ENCODE measurements at regions of chr2 and their contacts with region 1.

Region 1: GRCh38 chr2:230658877-230659652 is 53.6 kb upstream of the CAB39 start:
- DNase-seq: peak; percentile 80
- H3K4me3 Mint-ChIP-seq: peak overlapping the region; percentile 91
- H3K27ac Mint-ChIP-seq: peak overlapping the region; percentile 99
- H3K4me1 Mint-ChIP-seq: peaks cover 83% of the 10 kb centered on the region
- H3K27me3 Mint-ChIP-seq: no peaks in the 10 kb centered on the region

Region 2: GRCh38 chr2:229921892-229922445 is 737.1 kb before region 1 on chr2 and contains the start of gene TRIP12:
- intact Hi-C with region 1: loop called (anchors 5 kb)
- DNase-seq: peak; percentile 89
- H3K4me3 Mint-ChIP-seq: peak within 1 kb of the TSS; percentile 100
- H3K27ac Mint-ChIP-seq: peak within 1 kb of the TSS; percentile 98
- H3K4me1 Mint-ChIP-seq: peaks cover 31% of the 10 kb centered on the region
- H3K27me3 Mint-ChIP-seq: no peaks in the 10 kb centered on the region
- total RNA-seq, gene TRIP12: 256 and 269 TPM in 2 replicates

Region 3: DNA sequence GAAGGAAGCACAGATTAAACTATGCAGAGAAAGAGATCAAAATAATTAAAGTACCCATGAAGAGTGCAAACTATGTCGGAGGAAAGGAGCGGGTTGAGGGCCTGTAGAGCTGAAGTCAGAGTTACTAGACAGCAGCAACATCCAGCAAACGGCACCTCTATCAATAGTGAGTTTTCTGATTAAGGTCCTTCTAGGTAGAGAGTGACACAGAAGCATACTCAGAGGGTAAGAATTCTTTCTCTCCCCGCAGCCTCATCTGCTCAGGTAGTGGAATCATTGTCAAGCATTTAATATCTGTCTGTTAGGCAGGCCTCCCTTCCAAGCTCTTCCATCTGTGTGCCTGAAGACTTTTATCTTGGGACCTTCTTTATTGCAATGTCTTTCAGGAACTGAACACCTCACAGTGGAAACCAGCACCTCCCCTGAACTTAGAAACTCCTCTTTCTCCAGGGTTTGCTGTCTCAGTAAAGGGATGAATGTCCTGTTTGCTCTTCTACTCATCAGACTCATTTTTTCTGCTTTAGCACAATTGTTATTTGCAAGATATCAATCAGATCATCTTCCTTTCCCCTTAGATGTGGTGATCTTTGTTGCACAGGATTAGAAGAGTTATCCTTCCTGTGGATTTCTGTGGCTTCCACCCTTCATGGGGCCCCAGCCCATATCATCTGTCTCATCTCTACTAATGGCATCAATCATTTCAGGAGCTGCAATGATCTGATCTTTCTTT is 404.7 kb before region 1 on chr2:
- intact Hi-C with region 1: loop called (anchors 2 kb)
- DNase-seq: peak; percentile 54
- H3K4me3 Mint-ChIP-seq: no peak overlapping the region
- H3K27ac Mint-ChIP-seq: no peak overlapping the region
- H3K4me1 Mint-ChIP-seq: peaks cover 17% of the 10 kb centered on the region
- H3K27me3 Mint-ChIP-seq: no peaks in the 10 kb centered on the region

Region 4: DNA sequence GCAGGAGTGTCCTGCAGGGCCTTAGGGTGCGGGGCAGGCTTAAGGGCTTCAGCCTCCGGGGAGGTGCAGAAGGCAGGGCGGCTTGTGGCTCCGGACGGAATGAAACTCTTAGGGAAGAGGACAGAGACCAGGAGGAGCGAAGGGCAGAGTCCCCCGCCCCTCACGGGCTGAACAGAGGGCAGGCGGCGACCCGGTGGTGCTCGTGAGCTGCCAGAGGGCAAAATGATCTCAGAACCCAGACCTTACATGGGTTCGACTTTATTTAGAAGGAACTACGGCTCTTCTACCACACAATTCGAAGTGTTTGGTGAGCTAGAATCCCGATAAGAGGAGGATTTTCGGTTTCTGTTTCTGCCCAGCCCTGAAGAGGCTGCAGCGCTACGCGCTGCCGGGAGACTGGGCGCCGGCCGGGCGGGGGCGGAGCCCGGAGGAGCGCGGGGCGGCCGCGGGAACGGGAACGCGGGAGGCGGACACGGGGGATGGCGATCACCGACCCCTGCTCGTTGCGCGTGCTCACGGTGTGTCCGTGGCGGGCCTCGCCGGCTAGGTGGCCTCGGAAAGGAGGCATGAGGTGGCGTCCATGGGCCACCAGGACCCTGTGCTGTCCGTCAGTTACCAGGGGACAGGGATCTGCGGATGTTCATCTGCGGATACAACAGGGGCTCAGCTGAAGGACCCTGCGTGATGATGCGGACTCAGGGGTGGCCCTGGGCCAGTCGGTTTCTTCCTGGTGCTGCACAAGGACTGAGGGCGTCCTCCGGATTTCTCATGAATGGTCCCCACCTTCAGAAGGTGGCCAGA is 247.3 kb before region 1 on chr2:
- intact Hi-C with region 1: loop called (anchors 5 kb)
- DNase-seq: peak; percentile 74
- H3K4me3 Mint-ChIP-seq: peak overlapping the region; percentile 98
- H3K27ac Mint-ChIP-seq: peak overlapping the region; percentile 100
- H3K4me1 Mint-ChIP-seq: peaks cover 61% of the 10 kb centered on the region
- H3K27me3 Mint-ChIP-seq: no peaks in the 10 kb centered on the region

Region 5: GRCh38 chr2:230537531-230537976 is 121.5 kb before region 1 on chr2:
- intact Hi-C with region 1: no loop called
- DNase-seq: no peak
- H3K4me3 Mint-ChIP-seq: no peak overlapping the region
- H3K27ac Mint-ChIP-seq: peak overlapping the region; percentile 44
- H3K4me1 Mint-ChIP-seq: peaks cover 39% of the 10 kb centered on the region
- H3K27me3 Mint-ChIP-seq: no peaks in the 10 kb centered on the region

Region 6: DNA sequence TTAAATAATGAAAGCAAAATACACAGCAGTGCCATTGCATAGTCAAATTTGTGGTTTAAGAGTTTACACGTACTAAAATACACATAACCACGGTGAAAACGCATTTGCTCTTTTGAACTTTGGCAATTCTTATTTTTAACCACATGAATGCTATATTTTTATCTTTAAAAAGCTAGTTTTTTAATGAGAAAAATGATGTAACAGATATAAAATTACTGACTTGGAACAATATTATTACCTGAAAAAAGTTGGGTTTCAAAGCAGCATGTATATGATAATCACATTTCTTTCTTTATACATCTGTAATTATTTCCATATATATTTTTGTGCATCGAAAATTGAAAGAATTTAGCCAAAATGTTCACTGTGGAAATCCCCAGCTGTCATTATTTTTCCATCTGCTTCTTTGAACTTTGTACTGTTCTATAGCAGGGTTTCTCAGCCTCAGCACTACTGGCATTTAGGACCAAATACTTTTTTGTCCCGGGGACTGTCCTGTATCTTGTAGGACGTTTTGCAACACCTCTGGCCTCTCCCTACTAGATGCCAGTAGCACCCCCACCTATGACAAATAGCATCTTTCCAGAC is 22.3 kb before region 1 on chr2:
- intact Hi-C with region 1: loop called (anchors 1 kb)
- DNase-seq: no peak
- H3K4me3 Mint-ChIP-seq: no peak overlapping the region
- H3K27ac Mint-ChIP-seq: peak overlapping the region; percentile 76
- H3K4me1 Mint-ChIP-seq: peaks cover 8% of the 10 kb centered on the region
- H3K27me3 Mint-ChIP-seq: no peaks in the 10 kb centered on the region

Region 7: DNA sequence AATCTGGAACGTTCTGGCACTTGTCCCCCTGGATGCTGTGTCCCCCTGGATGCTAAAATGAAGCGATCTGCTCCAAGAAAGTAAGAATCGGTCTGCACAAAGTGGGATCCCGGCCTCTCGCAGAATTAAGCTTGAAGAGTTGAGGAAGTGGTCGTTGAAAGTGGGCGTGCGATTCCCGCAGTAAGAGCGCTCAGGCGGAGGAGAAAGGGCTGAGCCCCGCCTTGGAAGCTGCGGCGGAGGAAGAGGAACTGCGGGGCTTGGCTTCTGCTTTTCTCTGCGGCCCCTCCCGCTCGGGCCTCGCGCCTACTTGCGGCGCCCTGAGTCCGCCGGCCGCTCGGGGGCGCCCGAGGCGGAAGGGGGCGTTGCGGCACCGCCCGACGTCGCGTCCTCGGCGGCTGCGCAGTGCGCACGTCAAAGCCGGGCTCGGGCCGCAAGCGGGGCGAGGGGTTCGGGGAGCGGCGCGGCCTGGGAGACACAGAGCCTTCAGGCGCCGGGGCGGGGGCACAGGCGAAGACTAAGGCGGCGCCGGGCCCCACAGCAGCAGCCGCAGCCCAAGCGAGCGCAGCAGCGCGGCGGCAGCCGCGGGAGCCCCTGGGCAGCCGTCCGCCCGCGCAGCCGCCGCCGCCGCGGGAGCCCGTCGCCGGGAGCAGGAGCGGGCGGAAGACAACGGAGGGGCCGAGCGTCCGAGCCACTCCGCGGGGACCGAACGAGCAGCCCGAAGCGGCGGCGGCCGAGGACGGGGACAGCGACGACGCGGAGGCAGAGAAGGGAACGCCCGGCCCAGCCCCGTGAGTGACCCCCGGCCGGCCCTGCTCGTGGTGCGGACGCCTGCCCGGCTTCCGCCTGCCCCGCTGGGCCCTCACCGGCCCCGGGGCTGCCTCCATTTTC is 53.6 kb after region 1 on chr2 and contains the start of gene CAB39:
- intact Hi-C with region 1: loop called (anchors 1 kb)
- DNase-seq: peak; percentile 87
- H3K4me3 Mint-ChIP-seq: peak within 1 kb of the TSS; percentile 99
- H3K27ac Mint-ChIP-seq: peak within 1 kb of the TSS; percentile 93
- H3K4me1 Mint-ChIP-seq: peaks cover 34% of the 10 kb centered on the region
- H3K27me3 Mint-ChIP-seq: no peaks in the 10 kb centered on the region
- total RNA-seq, gene CAB39: 173 and 176 TPM in 2 replicates

Region 8: DNA sequence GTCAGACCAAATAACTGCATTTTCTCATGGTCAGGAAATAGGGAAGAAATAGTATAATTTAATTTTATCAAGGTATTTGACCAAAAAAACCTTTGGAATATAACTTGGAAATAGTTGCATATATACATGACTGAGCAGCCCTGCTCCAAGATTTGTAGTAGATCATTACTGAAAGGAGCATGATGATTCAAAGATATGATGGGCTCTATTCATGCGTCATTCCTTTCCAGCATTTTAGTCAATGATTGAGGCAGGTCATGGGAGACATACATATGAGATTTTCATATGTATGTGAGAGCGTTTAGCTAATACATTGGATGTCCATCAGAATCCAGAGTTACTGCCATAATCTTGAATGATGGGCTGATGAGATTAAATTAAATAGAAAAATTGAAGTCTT is 128.0 kb after region 1 on chr2:
- intact Hi-C with region 1: no loop called
- DNase-seq: no peak
- H3K4me3 Mint-ChIP-seq: no peak overlapping the region
- H3K27ac Mint-ChIP-seq: no peak overlapping the region
- H3K4me1 Mint-ChIP-seq: peaks cover 45% of the 10 kb centered on the region
- H3K27me3 Mint-ChIP-seq: no peaks in the 10 kb centered on the region

Region 9: GRCh38 chr2:230798769-230799399 is 139.8 kb after region 1 on chr2:
- intact Hi-C with region 1: loop called (anchors 1 kb)
- DNase-seq: no peak
- H3K4me3 Mint-ChIP-seq: no peak overlapping the region
- H3K27ac Mint-ChIP-seq: peak overlapping the region; percentile 50
- H3K4me1 Mint-ChIP-seq: peaks cover 20% of the 10 kb centered on the region
- H3K27me3 Mint-ChIP-seq: no peaks in the 10 kb centered on the region

Measured in activated T-helper 2 cell treated with anti-CD3 and anti-CD28 coated beads, Interferon-gamma antibody, Interleukin-2, Interleukin-4, amounts not matched to agents 10 μg/mL and 5 μg/mL and 100 μg/mL, durations not matched to agents 14 hours and 24 hours and 36 hours (primary cell).